ENCODE measurements at regions of chr17 and their contacts with region 1.

Region 1: GRCh38 chr17:79393358-79394202 is 217.3 kb downstream of the RBFOX3 start:
- DNase-seq: peak; percentile 69 to 89
- ATAC-seq: peak; percentile 63 to 87
- H3K4me3 ChIP-seq: no peak overlapping the region
- H3K27ac ChIP-seq: no peak overlapping the region
- H3K4me1 ChIP-seq: no peaks in the 10 kb centered on the region
- CTCF ChIP-seq: peak; percentile 83
- EP300 ChIP-seq: no peak
- POLR2A ChIP-seq: no peak
- RAD21 ChIP-seq: peak; percentile 84 to 95

Region 2: GRCh38 chr17:79036596-79036995 is 357.0 kb before region 1 on chr17:
- CTCF ChIA-PET with region 1: interaction called, 16 read pairs
- POLR2A ChIA-PET with region 1: no interaction called
- DNase-seq: peak; percentile 75 to 87
- ATAC-seq: peak; percentile 70 to 72
- H3K4me3 ChIP-seq: no peak overlapping the region
- H3K27ac ChIP-seq: peak overlapping the region; percentile 80 to 89
- H3K4me1 ChIP-seq: peaks cover 48% of the 10 kb centered on the region
- CTCF ChIP-seq: no peak
- EP300 ChIP-seq: no peak
- POLR2A ChIP-seq: no peak
- RAD21 ChIP-seq: no peak

Region 3: DNA sequence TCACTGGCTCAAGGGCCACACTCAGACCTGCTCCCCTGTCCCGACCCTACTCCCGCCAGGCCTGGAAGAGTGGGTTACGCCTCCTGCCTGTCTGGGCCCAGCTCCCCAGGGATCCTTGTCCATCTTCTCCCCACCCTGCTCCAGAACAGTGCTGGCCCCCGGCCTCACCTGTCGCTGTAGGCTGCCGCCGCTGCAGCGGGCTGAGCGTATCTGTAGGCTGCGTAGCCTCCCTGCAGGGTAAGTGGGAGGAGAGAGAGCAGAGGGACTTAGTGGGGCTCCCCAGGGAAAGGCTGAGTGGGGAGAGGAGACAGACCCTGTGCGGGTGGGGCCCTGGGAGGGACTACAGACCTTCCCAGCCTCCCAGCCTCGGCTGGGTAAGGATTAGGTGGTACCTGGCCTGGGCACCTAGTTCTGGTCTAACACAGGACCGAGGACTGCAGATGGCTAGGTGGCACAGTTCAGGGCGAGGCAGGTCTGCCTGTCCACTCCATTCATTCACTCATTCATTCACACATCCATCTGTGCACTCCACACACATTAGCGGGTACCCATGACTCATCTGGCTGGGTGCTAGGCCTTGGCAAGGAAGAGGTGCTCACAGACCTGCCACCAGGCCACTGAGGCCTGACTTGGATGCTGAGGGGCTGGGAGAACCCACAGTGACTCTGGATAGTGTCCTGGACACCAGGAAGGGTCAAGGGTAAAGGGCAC is 298.1 kb before region 1 on chr17:
- CTCF ChIA-PET with region 1: interaction called, 555 read pairs
- POLR2A ChIA-PET with region 1: no interaction called
- DNase-seq: no peak
- ATAC-seq: peak; percentile 6 to 20; a peak in 4 of 6 replicates
- H3K4me3 ChIP-seq: no peak overlapping the region
- H3K27ac ChIP-seq: no peak overlapping the region
- H3K4me1 ChIP-seq: 0 out of 3 replicates have a peak, but pooled peaks cover 6% of the 10 kb centered on the region
- CTCF ChIP-seq: no peak
- EP300 ChIP-seq: no peak
- POLR2A ChIP-seq: no peak
- RAD21 ChIP-seq: no peak

Region 4: DNA sequence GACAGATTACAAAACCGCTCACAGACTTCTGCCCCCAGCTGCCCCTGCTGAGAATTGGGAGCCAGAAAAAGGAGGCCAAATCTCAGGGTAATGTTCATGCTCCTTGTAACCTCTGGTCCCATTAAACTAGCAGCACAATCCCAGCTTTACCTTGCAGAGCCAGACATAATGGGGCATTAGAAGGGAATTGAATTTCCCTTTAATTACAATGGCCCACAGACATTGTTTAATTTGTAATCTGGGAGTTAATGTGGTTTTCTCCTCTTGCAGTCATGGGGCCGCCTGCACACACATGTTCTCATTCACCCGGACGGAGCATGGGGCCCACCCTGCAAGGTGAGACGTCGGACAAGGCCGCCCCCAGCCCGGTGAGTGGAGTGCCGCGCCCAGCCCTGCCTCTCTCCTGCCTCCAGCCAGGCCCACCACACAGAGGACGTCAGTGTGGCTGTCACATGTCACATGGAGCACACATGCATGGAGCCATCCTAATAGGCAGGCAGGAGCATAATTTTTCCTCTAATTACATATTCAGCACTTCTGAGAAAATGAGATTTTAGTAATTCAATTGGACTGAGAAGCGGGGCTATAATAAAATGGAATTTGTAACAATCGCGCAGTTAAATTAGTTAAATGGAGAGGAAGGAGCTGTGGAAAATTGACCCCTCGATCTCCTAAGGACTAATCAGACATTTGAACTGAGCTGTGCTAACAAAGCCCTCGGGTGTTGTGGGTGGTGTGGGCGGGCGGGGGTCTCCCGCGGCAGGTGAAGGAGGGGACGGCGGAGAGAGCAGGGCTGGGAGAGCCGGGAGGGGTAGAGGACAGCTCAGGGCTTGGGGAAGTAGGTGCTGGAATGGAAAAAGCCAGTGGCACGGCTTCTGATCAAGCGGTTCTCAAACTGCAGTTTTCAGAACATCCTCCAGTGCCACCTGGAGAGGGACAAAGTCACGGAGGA is 231.3 kb before region 1 on chr17:
- CTCF ChIA-PET with region 1: interaction called, 18 read pairs
- POLR2A ChIA-PET with region 1: no interaction called
- DNase-seq: no peak
- ATAC-seq: no peak
- H3K4me3 ChIP-seq: no peak overlapping the region
- H3K27ac ChIP-seq: no peak overlapping the region
- H3K4me1 ChIP-seq: peaks cover 6% of the 10 kb centered on the region; the same call in 1 of the 3 replicates
- CTCF ChIP-seq: no peak
- EP300 ChIP-seq: no peak
- POLR2A ChIP-seq: no peak
- RAD21 ChIP-seq: no peak

Region 5: DNA sequence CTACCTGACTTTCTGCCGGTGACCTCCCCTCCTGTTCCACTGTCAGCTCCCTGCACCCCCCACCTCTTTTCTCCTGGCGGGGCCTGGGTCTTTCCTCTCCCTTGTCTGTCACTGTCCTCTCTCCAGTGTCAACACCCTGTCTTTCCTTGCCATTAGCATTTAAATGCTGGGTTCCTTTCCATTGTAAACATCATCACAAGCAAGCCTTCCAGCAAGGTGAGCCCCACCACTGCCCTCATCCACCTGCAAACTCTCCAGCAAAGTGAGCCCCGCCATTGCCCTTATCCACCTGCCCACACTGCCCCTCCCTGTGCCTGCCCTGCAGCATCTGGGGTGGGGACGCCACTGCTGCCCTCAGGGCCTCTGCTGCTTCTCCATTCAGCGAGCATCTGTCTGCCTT is 124.0 kb before region 1 on chr17:
- CTCF ChIA-PET with region 1: interaction called, 20 read pairs
- POLR2A ChIA-PET with region 1: no interaction called
- DNase-seq: no peak
- ATAC-seq: no peak
- H3K4me3 ChIP-seq: no peak overlapping the region
- H3K27ac ChIP-seq: no peak overlapping the region
- H3K4me1 ChIP-seq: peaks cover 12% of the 10 kb centered on the region
- CTCF ChIP-seq: no peak
- EP300 ChIP-seq: no peak
- POLR2A ChIP-seq: no peak
- RAD21 ChIP-seq: no peak

Region 6: DNA sequence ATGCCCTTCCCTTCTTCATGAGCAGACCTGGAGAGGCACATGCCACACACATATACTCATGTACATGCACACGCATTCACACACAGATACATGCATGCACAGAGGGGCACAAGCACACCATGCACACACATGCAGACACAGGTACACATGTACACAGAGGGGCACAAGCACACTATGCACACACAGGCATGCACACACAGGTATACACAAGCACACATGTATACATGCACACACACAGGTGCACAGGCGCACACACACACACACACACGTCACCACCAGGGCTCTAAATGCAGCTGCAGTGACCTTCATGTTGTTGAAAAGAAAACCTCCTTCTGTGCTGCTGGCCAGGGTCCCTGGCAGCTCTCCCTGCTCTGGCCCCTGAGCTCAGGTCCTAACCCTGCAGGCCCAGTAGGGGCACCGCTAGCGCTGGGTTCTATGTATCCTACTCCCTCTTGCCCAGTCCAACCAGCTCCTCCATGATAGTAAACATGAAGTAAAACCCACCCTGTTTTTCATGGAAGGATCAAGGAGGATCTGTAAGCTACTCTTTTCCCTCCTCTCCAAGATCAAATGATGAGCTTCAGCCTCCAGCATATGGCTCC is 44.4 kb after region 1 on chr17:
- CTCF ChIA-PET with region 1: interaction called, 11 read pairs
- POLR2A ChIA-PET with region 1: no interaction called
- DNase-seq: no peak
- ATAC-seq: peak; percentile 38 to 69; a peak in 3 of 6 replicates
- H3K4me3 ChIP-seq: no peak overlapping the region
- H3K27ac ChIP-seq: peak overlapping the region in 1 of 2 experiments; percentile 15; a peak in 1 of 6 replicates
- H3K4me1 ChIP-seq: peaks cover 37% of the 10 kb centered on the region
- CTCF ChIP-seq: no peak
- EP300 ChIP-seq: no peak
- POLR2A ChIP-seq: no peak
- RAD21 ChIP-seq: no peak

Region 7: DNA sequence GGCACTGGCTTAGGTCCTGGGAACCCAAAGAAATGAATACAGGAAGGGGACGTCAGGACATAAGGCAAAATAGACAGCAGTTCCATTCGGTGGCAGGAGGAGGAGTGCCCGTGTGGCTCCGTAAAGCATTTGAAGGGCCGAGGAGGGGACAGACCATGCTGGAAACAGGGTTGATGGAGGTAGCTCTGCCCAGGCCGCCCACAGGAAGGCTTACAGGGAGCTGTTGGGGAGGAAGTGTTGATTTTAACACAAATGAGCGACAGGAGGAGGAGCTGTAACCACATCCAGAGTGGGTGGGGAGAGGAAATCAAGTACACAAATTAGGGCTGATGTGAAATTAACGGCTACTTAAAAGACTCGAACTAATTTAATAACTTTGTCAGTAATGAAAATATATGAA is 162.7 kb after region 1 on chr17:
- CTCF ChIA-PET with region 1: no interaction called
- POLR2A ChIA-PET with region 1: no interaction called
- DNase-seq: no peak
- ATAC-seq: no peak
- H3K4me3 ChIP-seq: no peak overlapping the region
- H3K27ac ChIP-seq: 0 out of 6 replicates have a peak overlapping the region, but pooled peaks of 1 of the 2 experiments have one; percentile 5
- H3K4me1 ChIP-seq: peaks cover 15% of the 10 kb centered on the region
- CTCF ChIP-seq: no peak
- EP300 ChIP-seq: no peak
- POLR2A ChIP-seq: no peak
- RAD21 ChIP-seq: no peak

Region 8: GRCh38 chr17:79749156-79749815 is 355.7 kb after region 1 on chr17:
- CTCF ChIA-PET with region 1: no interaction called
- POLR2A ChIA-PET with region 1: no interaction called
- DNase-seq: peak in 1 of 2 experiments; percentile 30
- ATAC-seq: no peak
- H3K4me3 ChIP-seq: no peak overlapping the region
- H3K27ac ChIP-seq: 0 out of 6 replicates have a peak overlapping the region, but pooled peaks of 1 of the 2 experiments have one; percentile 4
- H3K4me1 ChIP-seq: peaks cover 34% of the 10 kb centered on the region
- CTCF ChIP-seq: no peak
- EP300 ChIP-seq: no peak
- POLR2A ChIP-seq: no peak
- RAD21 ChIP-seq: no peak